Calu3 (cell line): ENCODE measurements at regions of chr2 and their contacts with region 1.

Region 1: DNA sequence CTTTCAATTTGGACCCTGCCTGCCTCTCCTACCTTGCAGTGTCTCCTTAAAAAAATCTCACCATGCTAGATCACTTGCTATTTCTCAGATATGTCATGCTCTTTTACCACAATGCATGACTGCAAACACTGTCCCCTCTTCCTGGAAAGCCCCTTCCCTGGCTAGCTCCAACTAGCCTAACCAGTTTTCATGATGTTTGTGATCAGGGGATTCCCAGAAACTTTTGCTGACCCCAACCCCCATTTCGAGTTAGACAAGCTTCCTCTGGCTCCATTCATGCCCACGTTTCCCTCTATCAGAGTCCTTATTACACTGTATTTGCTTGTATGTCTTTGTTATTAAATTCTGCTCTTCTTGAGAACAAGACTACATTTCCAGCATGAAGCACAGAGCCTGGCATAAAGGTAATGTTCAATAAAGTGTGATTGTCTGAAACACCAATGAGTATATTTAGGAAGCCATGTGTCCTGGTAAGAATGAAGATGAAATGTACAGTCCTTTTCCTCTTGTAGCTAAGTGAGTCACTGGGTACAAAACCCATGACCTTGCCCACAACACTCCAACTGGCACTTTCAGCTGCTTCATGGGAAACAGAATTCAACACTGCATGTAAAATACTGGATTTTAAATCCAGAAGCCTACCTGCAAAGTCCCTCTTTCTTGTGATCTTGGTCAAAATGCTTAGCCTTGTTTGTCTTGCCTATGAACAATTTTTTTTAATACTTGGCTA is 62.0 kb upstream of the ATL2 start:
- DNase-seq: peak; percentile 84
- H3K4me3 Mint-ChIP-seq: peak overlapping the region; percentile 34
- H3K27ac Mint-ChIP-seq: peak overlapping the region; percentile 95
- H3K4me1 Mint-ChIP-seq: peaks cover 76% of the 10 kb centered on the region
- H3K27me3 Mint-ChIP-seq: no peaks in the 10 kb centered on the region
- CTCF ChIP-seq: no peak

Region 2: GRCh38 chr2:38394903-38395341 is 44.1 kb before region 1 on chr2:
- CTCF ChIA-PET with region 1: interaction called, 5 read pairs
- intact Hi-C with region 1: loop called (anchors 1 kb)
- DNase-seq: no peak
- H3K4me3 Mint-ChIP-seq: no peak overlapping the region
- H3K27ac Mint-ChIP-seq: peak overlapping the region; percentile 89
- H3K4me1 Mint-ChIP-seq: peaks cover 29% of the 10 kb centered on the region
- H3K27me3 Mint-ChIP-seq: no peaks in the 10 kb centered on the region
- CTCF ChIP-seq: no peak

Region 3: DNA sequence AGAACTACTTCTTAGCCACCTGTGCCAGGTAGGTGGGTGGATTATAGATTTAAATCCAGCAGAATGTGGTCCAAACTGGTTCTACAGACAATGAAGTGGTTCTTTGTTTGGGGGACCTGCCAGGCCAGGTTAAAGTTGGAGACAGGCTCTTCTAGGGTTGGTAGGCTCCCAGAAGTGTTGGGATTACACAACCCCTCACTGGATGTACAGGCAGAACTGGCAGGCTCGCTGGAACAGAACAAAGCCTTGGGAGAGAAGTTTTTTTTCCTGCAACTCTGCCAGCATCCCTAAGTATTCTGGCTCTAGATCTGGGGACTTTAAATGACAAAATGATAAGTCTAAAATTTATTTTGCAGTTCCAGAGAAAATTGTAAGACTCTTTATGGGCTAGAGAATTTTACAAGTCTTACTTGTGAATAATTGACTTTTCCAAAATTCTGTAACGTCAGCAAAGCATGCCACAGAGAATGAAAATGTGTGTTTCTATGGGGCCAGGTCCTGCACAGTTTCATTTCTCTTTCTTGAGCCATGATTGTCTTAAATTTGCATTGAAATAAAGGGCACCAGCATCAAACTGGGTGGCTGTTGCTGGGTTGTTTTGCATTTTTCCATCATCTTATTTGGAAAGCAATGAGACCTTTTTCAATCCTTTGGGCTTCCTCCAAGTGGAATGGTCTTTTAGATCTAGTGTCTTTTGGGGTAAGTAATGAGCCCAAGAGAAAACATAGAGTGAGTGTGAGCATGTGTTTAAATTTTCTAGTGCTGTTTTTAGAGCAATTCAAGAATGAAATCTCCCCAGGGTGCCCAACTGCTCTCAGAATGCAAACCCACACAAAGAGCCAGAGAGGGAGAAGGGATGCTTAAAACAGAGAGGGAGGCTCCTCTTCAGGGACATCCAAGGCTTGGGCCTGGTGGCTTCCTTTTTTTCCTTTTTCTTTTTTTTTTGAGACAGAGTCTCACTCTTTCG is 29.6 kb before region 1 on chr2:
- CTCF ChIA-PET with region 1: interaction called, 3 read pairs
- intact Hi-C with region 1: loop called (anchors 2 kb)
- DNase-seq: peak; percentile 67
- H3K4me3 Mint-ChIP-seq: no peak overlapping the region
- H3K27ac Mint-ChIP-seq: peak overlapping the region; percentile 82
- H3K4me1 Mint-ChIP-seq: peaks cover 46% of the 10 kb centered on the region
- H3K27me3 Mint-ChIP-seq: no peaks in the 10 kb centered on the region
- CTCF ChIP-seq: no peak

Region 4: DNA sequence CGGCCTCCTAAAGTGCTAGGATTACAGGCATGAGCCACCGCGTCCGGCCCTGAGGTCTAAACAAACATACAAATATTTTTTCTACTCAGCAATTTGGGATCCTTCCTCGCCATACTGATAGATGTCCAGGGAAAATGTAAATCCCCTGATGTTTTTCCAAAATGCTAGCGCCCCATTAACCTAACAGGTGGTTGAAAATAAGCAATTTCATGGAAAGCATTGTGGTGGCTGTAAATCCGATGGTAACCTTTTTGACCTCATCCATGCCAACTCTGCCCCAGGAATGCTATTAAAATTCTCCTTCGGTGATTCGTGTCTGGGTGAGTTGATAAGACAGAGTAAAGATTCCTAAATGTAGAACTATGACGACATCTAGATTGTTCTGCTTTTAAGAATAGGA is 358.2 kb after region 1 on chr2:
- CTCF ChIA-PET with region 1: no interaction called
- intact Hi-C with region 1: no loop called
- DNase-seq: no peak
- H3K4me3 Mint-ChIP-seq: no peak overlapping the region
- H3K27ac Mint-ChIP-seq: no peak overlapping the region
- H3K4me1 Mint-ChIP-seq: peaks cover 15% of the 10 kb centered on the region
- H3K27me3 Mint-ChIP-seq: no peaks in the 10 kb centered on the region
- CTCF ChIP-seq: no peak